ENCODE measurements at regions of chr2 and their contacts with region 1.

Region 1: GRCh38 chr2:239223310-239224198 is 177.3 kb downstream of the HDAC4 start:
- DNase-seq: peak in 1 of 2 donors; percentile 87
- H3K4me3 ChIP-seq: peak overlapping the region in 1 of 2 donors; percentile 55
- H3K27ac ChIP-seq: peak overlapping the region; percentile 83 to 96
- H3K4me1 ChIP-seq: peaks cover 24 to 60% of the 10 kb centered on the region in 2 donors
- H3K27me3 ChIP-seq: no peaks in the 10 kb centered on the region
- CTCF ChIP-seq: no peak

Region 2: DNA sequence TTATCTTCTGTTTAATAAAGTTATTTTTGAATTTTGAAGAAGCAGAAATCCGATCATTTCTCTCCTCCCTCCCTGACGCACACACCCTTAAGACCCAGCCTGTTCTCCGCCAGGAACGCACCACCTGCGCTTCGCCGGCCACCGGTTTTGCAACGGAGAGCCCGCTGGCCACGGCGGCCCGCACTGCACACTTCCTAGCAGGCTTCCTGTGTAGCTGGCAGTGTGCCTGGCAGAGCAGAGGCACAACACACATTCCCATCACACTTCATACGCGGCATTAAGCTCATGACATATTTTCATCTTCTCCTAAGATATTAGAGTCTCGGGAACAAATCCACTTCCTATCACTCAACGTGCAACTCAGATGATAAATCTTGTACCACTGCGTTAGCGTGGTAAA is 29.2 kb after region 1 on chr2:
- intact Hi-C with region 1: loop called (anchors 2 kb)
- DNase-seq: peak in 1 of 2 donors; percentile 90
- H3K4me3 ChIP-seq: peak overlapping the region; percentile 2 to 36
- H3K27ac ChIP-seq: peak overlapping the region in 1 of 2 donors; percentile 22
- H3K4me1 ChIP-seq: peaks cover 7 to 8% of the 10 kb centered on the region in 2 donors
- H3K27me3 ChIP-seq: no peaks in the 10 kb centered on the region
- CTCF ChIP-seq: no peak

Region 3: DNA sequence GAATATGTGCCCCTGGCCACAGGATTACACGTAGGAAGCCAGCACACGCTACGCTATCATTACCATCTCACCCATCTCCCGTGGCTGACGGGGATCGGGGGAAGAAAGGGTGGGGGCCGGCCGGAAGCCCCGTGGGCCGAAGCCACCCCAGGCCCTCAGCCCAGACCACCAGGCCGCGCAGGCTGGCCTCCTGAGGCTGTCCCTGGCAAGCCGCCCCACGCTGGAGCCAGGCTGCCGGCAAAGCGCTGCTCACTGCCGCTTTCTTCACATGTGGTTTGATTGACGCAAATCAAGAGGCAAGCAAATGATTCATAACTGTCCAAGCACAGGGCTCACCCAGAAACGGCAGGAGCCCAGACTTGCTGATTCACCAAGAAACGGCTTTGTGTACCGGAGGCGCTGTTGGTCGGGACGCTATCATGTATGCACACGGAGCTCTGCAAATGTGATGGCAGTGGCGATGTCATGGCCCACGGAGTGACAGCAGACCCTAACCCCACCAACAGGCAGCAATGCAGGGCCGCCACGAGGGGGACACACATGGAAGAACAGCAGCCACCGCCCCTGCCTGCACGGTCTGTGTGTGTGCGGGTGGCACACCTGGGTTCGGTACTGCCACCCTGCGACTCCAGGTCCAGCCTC is 51.6 kb after region 1 on chr2:
- intact Hi-C with region 1: loop called (anchors 2 kb)
- DNase-seq: peak; percentile 82 to 96
- H3K4me3 ChIP-seq: peak overlapping the region; percentile 18 to 50
- H3K27ac ChIP-seq: peak overlapping the region; percentile 68 to 81
- H3K4me1 ChIP-seq: peaks cover 13 to 32% of the 10 kb centered on the region in 2 donors
- H3K27me3 ChIP-seq: no peaks in the 10 kb centered on the region
- CTCF ChIP-seq: peak in 1 of 3 experiments; percentile 14

Region 4: DNA sequence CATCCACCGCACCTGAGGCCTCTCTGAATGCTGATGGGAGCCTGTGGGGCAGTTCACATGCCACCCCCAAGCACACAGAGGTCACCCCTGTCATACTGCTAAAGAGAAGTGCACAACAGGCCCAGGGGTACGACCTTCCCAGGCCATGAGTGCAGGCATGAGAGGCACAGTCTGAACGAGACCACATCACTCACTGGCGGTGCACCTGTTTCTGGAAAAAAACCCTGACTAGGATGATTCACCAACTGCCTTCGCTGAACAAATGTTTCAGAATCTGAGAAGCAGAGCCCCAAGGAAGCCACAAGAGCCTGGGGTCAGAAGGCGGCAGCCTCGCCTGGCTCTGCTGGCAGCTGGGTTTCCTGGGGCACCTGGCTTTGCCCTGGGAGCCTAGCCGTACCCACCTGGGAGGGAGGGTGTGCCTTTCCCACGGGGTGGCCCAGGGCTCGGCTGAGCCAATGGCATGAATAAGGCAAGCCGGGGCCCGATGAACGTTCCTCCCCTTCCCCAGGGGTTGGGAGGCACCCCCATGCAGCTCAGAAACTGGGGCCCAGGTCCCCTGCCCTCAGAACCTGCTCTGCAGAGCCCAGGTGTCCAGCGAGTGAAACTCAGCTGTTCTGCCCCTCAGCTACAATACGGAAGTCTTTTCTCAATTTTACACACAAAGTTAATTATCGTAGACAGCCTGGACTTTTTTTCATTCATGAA is 103.4 kb after region 1 on chr2:
- intact Hi-C with region 1: loop called (anchors 5 kb)
- DNase-seq: peak in 1 of 2 donors; percentile 57
- H3K4me3 ChIP-seq: no peak overlapping the region
- H3K27ac ChIP-seq: peak overlapping the region; percentile 78 to 86
- H3K4me1 ChIP-seq: peaks cover 17 to 38% of the 10 kb centered on the region in 2 donors
- H3K27me3 ChIP-seq: no peaks in the 10 kb centered on the region
- CTCF ChIP-seq: no peak

Region 5: GRCh38 chr2:240111251-240111650 is 887.7 kb after region 1 on chr2:
- intact Hi-C with region 1: no loop called
- DNase-seq: no peak
- H3K4me3 ChIP-seq: no peak overlapping the region
- H3K27ac ChIP-seq: no peak overlapping the region
- H3K4me1 ChIP-seq: no peaks in the 10 kb centered on the region
- H3K27me3 ChIP-seq: no peaks in the 10 kb centered on the region
- CTCF ChIP-seq: no peak

Region 6: DNA sequence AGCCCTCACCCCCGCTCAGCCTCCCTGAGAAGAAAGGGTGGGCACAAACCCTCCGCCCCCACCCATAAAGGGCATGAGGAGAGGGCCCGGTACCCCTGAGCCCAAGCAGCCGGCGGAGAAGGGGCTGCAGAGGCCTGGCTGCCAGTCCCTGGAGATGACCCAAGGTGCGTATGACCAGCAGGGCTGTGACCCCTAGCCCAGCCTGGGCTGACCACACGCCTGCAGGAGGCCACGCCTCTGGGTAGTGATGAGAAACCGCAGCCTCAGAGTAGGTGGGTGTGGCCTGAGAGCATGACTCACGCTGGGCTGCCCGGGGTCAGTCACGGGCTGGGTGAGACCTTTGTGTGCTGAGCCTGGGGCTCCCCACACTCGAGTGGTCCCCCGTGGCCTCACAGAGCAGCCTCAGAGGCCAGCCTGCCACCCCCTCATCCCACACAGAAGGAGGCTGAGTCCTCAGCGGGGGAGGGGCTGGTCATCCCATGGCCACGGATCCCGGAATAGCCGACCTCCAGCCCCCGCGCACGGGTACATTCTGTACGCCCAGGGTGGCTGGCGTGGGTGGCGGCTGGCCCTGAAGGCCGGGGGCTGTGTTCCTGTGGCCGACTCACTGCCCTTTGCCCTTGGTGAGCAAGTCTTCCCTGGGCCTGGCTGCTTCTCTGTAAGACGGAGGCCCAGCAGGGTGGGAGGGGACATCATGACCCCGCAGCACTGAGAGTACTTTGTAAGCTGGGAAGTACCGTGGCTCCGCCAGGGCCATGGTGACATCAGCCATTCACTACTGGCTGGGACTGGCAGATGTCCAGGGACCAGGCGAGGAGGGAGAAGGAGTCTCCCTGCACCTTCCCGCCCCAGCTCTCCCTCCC is 1027.7 kb after region 1 on chr2:
- intact Hi-C with region 1: loop called (anchors 10 kb)
- DNase-seq: peak; percentile 93 to 98
- H3K4me3 ChIP-seq: peak overlapping the region in 1 of 2 donors; percentile 19
- H3K27ac ChIP-seq: peak overlapping the region; percentile 87 to 93
- H3K4me1 ChIP-seq: peaks cover 14 to 22% of the 10 kb centered on the region in 2 donors
- H3K27me3 ChIP-seq: no peaks in the 10 kb centered on the region
- CTCF ChIP-seq: no peak